T-cell (primary cell): ENCODE measurements at regions of chr4 and their contacts with region 1.

Region 1: GRCh38 chr4:70739496-70740337 is 18.0 kb downstream of the RUFY3 start:
- DNase-seq: no peak
- ATAC-seq: no peak
- H3K4me3 ChIP-seq: no peak overlapping the region
- H3K4me3 Mint-ChIP-seq: no peak overlapping the region
- H3K27ac ChIP-seq: no peak overlapping the region
- H3K27ac Mint-ChIP-seq: no peak overlapping the region
- H3K4me1 ChIP-seq: peaks cover 31 to 36% of the 10 kb centered on the region in 2 experiments
- H3K4me1 Mint-ChIP-seq: peaks cover 29 to 48% (median 30%) of the 10 kb centered on the region in 3 donors
- H3K27me3 ChIP-seq: no peaks in the 10 kb centered on the region
- H3K27me3 Mint-ChIP-seq: no peaks in the 10 kb centered on the region

Region 2: DNA sequence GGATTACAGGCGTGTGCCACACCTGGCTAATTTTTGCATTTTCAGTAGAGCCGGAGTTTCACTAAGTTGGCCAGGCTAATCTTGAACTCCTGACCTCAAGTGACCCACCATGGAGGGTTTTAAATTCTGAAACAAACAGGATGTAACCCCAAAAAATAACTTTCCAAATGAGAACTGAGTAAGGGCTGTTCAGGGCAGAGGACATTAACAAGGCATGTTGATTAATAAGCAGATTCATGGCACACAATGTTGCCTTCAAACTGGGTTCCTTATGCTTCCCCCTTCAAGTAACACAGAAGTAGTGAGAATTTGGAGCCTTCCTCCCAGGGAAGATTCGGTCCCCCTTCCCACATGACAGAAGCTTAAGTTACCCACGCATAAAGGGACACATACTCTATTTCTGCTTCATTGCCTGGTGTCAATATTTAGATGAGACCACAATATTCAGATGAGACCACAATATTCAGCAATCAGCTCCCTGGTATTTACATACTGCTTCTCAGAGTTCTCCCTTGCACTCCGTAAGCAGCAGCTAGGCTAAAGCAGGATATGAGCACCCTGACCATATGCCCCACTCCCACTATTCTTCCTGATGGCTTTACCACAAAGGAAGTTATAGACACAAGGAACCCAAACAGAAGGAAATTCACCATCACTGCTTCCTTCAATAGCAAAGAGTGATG is 78.6 kb after region 1 on chr4:
- CTCF ChIA-PET with region 1: interaction called, 5 to 15 read pairs
- POLR2A ChIA-PET with region 1: no interaction called
- DNase-seq: no peak
- ATAC-seq: no peak
- H3K4me3 ChIP-seq: no peak overlapping the region
- H3K4me3 Mint-ChIP-seq: no peak overlapping the region
- H3K27ac ChIP-seq: no peak overlapping the region
- H3K27ac Mint-ChIP-seq: peak overlapping the region in 1 of 2 donors; percentile 18
- H3K4me1 ChIP-seq: no peaks in the 10 kb centered on the region
- H3K4me1 Mint-ChIP-seq: peaks cover 11 to 14% (median 13%) of the 10 kb centered on the region in 3 donors
- H3K27me3 ChIP-seq: no peaks in the 10 kb centered on the region
- H3K27me3 Mint-ChIP-seq: no peaks in the 10 kb centered on the region

Region 3: DNA sequence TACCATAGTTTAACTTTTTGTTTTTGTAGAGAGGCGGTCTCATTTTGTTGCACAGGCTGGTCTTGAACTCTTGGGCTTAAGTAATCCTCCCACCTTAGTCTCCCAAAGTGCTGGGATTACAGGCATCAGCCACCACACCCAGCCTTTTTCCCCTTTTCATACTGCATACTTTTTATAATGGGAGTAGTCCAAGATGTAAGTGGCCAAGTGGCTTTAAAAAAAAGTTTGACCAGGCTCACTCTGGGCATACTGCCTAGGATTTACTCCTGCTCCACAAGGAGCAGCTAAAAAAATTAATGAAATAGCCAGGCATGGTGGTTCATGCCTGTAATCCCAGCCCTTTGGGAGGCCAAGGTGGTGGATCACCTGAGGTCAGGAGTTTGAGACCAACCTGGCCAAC is 94.0 kb after region 1 on chr4:
- CTCF ChIA-PET with region 1: interaction called, 10 to 19 read pairs
- POLR2A ChIA-PET with region 1: interaction called in 1 of 2 experiments, 9 read pairs
- DNase-seq: no peak
- ATAC-seq: no peak
- H3K4me3 ChIP-seq: no peak overlapping the region
- H3K4me3 Mint-ChIP-seq: no peak overlapping the region
- H3K27ac ChIP-seq: no peak overlapping the region
- H3K27ac Mint-ChIP-seq: no peak overlapping the region
- H3K4me1 ChIP-seq: peaks cover 13 to 25% of the 10 kb centered on the region in 2 experiments
- H3K4me1 Mint-ChIP-seq: peaks cover 31 to 44% (median 37%) of the 10 kb centered on the region in 3 donors
- H3K27me3 ChIP-seq: no peaks in the 10 kb centered on the region
- H3K27me3 Mint-ChIP-seq: no peaks in the 10 kb centered on the region

Region 4: GRCh38 chr4:70915036-70915815 is 175.5 kb after region 1 on chr4:
- CTCF ChIA-PET with region 1: no interaction called
- POLR2A ChIA-PET with region 1: no interaction called
- DNase-seq: no peak
- ATAC-seq: no peak
- H3K4me3 ChIP-seq: no peak overlapping the region
- H3K4me3 Mint-ChIP-seq: no peak overlapping the region
- H3K27ac ChIP-seq: no peak overlapping the region
- H3K27ac Mint-ChIP-seq: no peak overlapping the region
- H3K4me1 ChIP-seq: no peaks in the 10 kb centered on the region
- H3K4me1 Mint-ChIP-seq: peaks cover 19 to 41% (median 22%) of the 10 kb centered on the region in 3 donors
- H3K27me3 ChIP-seq: no peaks in the 10 kb centered on the region
- H3K27me3 Mint-ChIP-seq: no peaks in the 10 kb centered on the region